ENCODE measurements at regions of chr20 and their contacts with region 1.

Region 1: GRCh38 chr20:48657475-48658470 is 170.0 kb downstream of the PREX1 start:
- DNase-seq: peak; percentile 65
- ATAC-seq: peak; percentile 85
- H3K4me3 Mint-ChIP-seq: no peak overlapping the region
- H3K27ac Mint-ChIP-seq: no peak overlapping the region; the same call in 1 of the 2 replicates
- H3K4me1 Mint-ChIP-seq: 0 out of 2 replicates have a peak, but pooled peaks cover 4% of the 10 kb centered on the region
- H3K27me3 Mint-ChIP-seq: no peaks in the 10 kb centered on the region
- CTCF ChIP-seq: peak; percentile 94

Region 2: DNA sequence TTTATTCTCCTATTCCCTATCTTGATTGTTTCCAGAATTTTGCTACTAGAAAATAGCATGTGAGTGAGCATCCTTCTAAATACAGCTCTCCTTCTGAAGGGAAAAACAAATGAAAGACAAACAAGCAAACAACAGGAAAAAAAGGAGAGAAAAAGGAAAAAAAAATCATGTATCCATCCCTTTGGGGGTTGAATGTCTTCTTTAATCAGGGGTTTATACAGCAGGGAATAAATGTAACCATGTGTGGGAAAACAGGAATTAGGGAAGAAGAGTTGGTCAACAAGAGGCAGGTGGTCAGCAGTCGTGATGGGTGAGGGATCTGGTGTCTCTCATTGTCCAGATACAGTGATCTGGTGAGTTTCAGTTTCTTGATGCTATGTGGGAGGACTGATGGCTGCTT is 265.8 kb before region 1 on chr20:
- CTCF ChIA-PET with region 1: no interaction called
- POLR2A ChIA-PET with region 1: no interaction called
- DNase-seq: no peak
- ATAC-seq: no peak
- H3K4me3 Mint-ChIP-seq: no peak overlapping the region
- H3K27ac Mint-ChIP-seq: no peak overlapping the region
- H3K4me1 Mint-ChIP-seq: peaks cover 9% of the 10 kb centered on the region
- H3K27me3 Mint-ChIP-seq: no peaks in the 10 kb centered on the region; the same call in 1 of the 2 replicates
- CTCF ChIP-seq: no peak

Region 3: DNA sequence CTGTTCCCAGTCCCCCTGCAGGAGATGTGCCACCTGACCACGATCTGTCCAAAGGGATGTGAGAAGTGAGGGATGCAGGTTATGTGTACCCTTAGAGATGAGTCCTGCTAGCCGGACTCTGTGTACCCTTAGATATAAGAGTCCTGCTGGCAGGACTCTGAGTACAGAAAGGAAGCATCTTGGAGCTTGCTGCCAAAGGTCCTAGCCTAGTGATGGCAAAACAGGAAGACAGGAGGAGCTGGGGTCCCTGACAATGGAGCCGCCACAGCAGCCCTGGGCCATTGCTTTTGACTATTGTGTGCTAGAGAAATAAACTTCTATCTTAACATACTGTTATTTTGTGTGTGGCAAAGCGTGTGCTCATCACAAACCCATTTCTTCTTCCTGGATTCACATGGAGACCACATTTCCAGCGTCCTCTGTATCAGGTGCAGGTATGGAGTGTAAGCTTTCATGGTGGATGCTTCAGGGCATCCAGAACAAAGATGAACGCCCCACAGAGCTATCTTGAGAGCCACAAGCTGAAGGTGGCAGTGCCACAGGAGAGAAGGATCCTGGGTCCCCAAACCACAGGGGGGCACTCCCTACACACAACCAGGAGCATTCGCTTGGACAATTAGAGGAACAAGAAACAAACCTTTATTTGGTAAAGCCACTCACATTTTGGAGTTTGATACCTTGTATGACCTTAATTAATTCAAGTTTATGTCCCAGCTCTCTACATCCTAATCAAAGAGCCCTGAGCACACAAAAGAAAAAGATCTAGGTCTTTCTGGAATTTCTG is 236.4 kb before region 1 on chr20:
- CTCF ChIA-PET with region 1: no interaction called
- POLR2A ChIA-PET with region 1: no interaction called
- DNase-seq: no peak
- ATAC-seq: no peak
- H3K4me3 Mint-ChIP-seq: no peak overlapping the region
- H3K27ac Mint-ChIP-seq: no peak overlapping the region
- H3K4me1 Mint-ChIP-seq: peaks cover 4% of the 10 kb centered on the region
- H3K27me3 Mint-ChIP-seq: no peaks in the 10 kb centered on the region
- CTCF ChIP-seq: no peak

Region 4: GRCh38 chr20:48597405-48598302 is 60.1 kb before region 1 on chr20:
- CTCF ChIA-PET with region 1: no interaction called
- POLR2A ChIA-PET with region 1: no interaction called
- DNase-seq: peak; percentile 5
- ATAC-seq: no peak
- H3K4me3 Mint-ChIP-seq: no peak overlapping the region
- H3K27ac Mint-ChIP-seq: no peak overlapping the region
- H3K4me1 Mint-ChIP-seq: peaks cover 10% of the 10 kb centered on the region
- H3K27me3 Mint-ChIP-seq: no peaks in the 10 kb centered on the region
- CTCF ChIP-seq: no peak

Region 5: DNA sequence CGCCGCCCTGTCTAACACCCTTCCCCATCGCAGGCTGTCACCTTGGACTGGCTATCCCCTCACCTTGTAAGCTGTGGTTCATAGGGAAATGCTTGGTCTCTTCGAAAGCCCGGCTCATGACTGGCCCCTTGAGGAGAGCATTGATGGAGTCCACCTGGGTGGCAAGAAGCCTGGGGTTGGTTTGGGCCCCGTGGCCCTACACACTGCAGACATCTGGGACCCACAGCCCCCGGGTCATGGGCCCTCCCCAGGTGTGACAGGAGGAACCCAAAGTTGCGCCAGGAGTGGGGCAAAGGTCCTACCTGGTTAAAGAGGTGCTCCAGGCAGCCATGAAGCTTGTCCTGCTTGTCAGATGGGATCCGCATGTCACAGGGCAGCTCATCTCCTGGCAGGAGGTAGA is 15.7 kb before region 1 on chr20:
- CTCF ChIA-PET with region 1: interaction called, 12 read pairs
- POLR2A ChIA-PET with region 1: no interaction called
- DNase-seq: no peak
- ATAC-seq: no peak
- H3K4me3 Mint-ChIP-seq: no peak overlapping the region
- H3K27ac Mint-ChIP-seq: no peak overlapping the region
- H3K4me1 Mint-ChIP-seq: no peaks in the 10 kb centered on the region
- H3K27me3 Mint-ChIP-seq: no peaks in the 10 kb centered on the region
- CTCF ChIP-seq: no peak

Region 6: DNA sequence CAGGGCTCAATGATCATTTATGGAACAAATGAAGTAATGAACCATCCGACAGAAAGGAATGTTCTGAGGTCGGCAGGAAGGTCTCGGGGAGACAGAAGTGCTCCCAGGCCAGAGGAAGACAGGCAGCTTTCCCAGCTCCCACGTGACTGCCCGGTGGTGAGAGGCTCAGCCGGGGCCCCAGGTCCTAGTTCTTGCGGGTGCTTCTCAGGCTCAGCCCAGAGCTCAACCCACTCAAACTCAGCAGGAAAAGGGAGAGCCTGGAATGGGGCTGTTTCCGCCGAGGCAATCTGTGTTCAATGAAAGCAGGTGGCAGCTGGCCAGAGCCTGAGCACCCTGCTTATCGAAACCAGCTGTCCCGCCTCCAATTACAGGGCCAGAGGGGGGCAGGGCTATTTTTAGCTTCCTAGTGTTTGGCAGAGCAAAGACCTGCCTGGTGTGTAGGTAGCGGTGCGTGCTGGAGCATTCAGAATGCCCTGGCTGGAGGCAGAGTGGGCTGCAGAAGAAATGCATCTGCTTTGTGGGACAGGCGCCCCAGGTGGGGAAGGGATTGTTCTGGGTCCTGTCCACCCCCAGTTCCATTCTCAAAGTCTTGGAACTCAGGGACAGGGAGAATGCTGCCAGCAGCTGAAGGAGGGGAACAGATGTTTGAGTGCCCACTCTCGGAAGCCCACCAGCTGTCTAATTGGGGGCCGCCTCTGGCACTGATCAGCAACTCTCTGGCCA is 24.9 kb after region 1 on chr20:
- CTCF ChIA-PET with region 1: interaction called, 32 read pairs
- POLR2A ChIA-PET with region 1: no interaction called
- DNase-seq: peak; percentile 71
- ATAC-seq: peak; percentile 86
- H3K4me3 Mint-ChIP-seq: no peak overlapping the region
- H3K27ac Mint-ChIP-seq: no peak overlapping the region
- H3K4me1 Mint-ChIP-seq: peaks cover 31% of the 10 kb centered on the region
- H3K27me3 Mint-ChIP-seq: no peaks in the 10 kb centered on the region
- CTCF ChIP-seq: no peak

Region 7: DNA sequence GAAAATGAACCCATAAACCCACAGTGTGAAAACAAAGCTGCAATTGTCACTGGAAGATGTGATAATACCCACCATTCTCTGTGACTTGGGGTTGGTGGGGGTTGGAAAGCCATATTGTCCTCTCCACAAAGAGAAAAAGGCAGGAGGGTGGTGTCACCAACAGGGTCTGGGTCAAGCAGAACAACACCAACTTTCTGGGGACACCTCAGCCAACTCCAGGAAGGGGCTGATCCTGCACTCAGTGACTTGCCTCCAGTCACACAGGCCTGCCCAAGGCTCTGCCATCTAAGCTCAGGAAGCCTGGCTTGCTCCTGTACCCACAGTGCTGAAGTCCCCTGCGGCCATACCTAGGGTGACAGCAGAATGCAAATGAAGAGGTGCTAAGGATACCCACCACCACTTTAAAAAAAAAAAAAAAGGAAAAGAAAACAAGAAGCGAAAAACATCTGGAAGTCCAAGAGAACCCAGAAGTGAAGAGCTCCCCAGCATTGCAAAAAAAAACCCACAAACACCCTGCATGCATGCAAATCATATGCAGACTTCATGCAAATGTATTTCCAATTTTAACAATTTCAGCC is 59.4 kb after region 1 on chr20:
- CTCF ChIA-PET with region 1: interaction called, 10 read pairs
- POLR2A ChIA-PET with region 1: no interaction called
- DNase-seq: no peak
- ATAC-seq: no peak
- H3K4me3 Mint-ChIP-seq: no peak overlapping the region
- H3K27ac Mint-ChIP-seq: no peak overlapping the region
- H3K4me1 Mint-ChIP-seq: peaks cover 1% of the 10 kb centered on the region
- H3K27me3 Mint-ChIP-seq: no peaks in the 10 kb centered on the region
- CTCF ChIP-seq: no peak

Region 8: DNA sequence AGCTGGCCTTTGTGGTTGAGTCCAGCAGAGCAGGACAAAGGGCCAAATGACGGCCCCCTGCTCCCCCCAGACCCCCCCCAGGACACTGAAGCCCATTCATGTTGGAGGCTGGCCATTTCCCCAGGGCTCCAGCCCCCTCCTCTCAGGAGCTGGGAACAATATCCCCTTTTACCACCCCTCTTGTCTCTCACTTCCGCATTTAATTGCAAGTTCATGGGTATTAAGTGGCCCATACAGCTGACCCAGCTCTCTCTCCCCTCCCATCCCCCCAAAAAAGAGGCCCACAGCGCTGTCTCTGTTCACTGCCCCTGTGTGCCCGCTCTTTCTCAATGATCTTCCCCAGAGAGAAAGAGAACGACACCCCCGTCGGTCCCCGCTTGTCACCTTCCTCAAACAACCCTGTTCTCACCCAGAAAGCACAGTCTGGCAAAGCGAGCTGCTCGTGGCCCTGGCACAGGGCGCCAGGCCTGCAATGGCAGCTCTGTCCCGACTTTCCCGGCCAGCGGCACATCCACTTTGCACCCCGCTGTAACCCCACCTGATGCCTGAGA is 139.6 kb after region 1 on chr20:
- CTCF ChIA-PET with region 1: interaction called, 23 read pairs
- POLR2A ChIA-PET with region 1: no interaction called
- DNase-seq: no peak
- ATAC-seq: peak; percentile 29
- H3K4me3 Mint-ChIP-seq: peak overlapping the region; percentile 44
- H3K27ac Mint-ChIP-seq: peak overlapping the region; percentile 87
- H3K4me1 Mint-ChIP-seq: peaks cover 38% of the 10 kb centered on the region
- H3K27me3 Mint-ChIP-seq: no peaks in the 10 kb centered on the region
- CTCF ChIP-seq: no peak

Region 9: DNA sequence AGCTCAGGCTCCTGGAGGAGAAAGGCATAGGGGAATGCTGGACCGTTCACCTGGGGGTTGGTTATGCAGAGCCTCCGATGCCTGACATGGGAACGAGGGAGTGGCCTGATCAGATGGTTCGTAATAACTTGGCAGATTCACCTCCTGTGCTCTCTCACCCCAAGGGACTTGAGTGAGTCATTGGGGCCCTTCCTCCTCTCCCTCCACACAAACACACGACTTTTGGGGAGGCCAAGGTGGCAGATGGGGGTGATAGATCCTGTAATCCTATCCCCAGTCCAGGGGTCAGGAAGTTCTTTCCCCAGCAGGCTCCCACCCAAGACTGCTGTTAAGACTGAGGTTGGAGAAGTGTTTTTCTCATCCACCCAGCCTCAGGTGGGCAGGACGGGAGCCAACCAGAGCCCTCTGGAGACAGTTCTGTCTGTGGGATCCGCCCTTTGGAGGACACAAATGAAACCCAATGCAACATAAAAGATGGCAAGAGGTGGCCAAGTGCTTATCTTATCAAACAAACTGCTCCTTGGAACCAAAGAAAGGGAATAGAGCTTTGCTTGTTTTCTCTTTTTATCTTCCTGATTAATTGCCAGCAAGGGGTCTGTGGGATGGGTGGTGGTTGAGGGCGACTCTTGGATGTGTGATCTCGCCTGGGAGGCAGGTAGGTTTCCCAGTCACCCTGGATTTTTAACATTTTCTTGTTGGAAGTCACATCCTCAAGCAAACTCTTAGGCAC is 218.3 kb after region 1 on chr20:
- CTCF ChIA-PET with region 1: interaction called, 13 read pairs
- POLR2A ChIA-PET with region 1: no interaction called
- DNase-seq: no peak
- ATAC-seq: no peak
- H3K4me3 Mint-ChIP-seq: no peak overlapping the region
- H3K27ac Mint-ChIP-seq: no peak overlapping the region
- H3K4me1 Mint-ChIP-seq: 0 out of 2 replicates have a peak, but pooled peaks cover 3% of the 10 kb centered on the region
- H3K27me3 Mint-ChIP-seq: no peaks in the 10 kb centered on the region; the same call in 1 of the 2 replicates
- CTCF ChIP-seq: no peak

Region 10: DNA sequence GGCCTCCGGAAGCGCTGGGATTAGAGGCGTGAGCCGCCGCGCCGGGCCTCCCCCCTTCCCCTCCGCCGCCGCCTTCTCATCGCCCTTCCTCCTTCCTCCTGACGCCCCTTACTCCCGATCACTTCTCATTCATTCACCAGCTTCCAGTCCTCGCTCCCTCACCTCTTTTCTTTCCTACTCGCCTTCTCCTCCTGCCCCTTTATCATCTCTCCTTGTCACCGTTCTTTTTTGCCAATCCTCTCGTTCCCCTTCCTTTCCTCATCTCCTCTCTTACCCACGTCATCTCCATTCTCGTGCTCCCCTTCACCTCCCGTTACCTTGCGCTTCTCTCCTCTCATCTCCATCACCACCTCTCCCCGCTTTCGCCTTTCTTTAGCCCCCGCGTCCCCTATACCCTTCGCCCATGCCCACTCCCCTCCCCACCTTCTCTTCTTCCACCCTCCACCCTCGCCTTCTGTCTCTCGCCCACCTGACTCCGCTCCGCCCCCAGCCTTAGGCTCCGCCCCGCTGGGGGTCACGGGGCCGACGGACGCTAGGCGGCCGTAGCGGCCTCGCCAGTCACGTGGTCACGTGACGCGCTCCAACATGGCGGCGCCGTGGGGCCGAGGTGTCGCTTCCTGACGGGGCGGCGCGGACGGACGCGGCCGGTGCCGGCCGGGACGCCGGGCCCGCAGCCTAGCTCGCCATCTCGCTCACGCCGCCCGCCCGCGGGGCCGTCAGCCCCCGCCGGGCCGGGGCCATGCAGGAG is 263.6 kb after region 1 on chr20 and contains the start of gene ARFGEF2:
- CTCF ChIA-PET with region 1: interaction called, 10 read pairs
- POLR2A ChIA-PET with region 1: no interaction called
- DNase-seq: peak; percentile 93
- ATAC-seq: peak; percentile 94
- H3K4me3 Mint-ChIP-seq: peak within 1 kb of the TSS; percentile 95
- H3K27ac Mint-ChIP-seq: peak within 1 kb of the TSS; percentile 99
- H3K4me1 Mint-ChIP-seq: peaks cover 27% of the 10 kb centered on the region
- H3K27me3 Mint-ChIP-seq: no peaks in the 10 kb centered on the region
- CTCF ChIP-seq: no peak
- total RNA-seq, gene ARFGEF2: 17.3 to 20.9 TPM (median 17.7 TPM) in 3 replicates

Measured in WTC11 (cell line).